ENCODE measurements at regions of chr1 and their contacts with region 1.

Region 1: DNA sequence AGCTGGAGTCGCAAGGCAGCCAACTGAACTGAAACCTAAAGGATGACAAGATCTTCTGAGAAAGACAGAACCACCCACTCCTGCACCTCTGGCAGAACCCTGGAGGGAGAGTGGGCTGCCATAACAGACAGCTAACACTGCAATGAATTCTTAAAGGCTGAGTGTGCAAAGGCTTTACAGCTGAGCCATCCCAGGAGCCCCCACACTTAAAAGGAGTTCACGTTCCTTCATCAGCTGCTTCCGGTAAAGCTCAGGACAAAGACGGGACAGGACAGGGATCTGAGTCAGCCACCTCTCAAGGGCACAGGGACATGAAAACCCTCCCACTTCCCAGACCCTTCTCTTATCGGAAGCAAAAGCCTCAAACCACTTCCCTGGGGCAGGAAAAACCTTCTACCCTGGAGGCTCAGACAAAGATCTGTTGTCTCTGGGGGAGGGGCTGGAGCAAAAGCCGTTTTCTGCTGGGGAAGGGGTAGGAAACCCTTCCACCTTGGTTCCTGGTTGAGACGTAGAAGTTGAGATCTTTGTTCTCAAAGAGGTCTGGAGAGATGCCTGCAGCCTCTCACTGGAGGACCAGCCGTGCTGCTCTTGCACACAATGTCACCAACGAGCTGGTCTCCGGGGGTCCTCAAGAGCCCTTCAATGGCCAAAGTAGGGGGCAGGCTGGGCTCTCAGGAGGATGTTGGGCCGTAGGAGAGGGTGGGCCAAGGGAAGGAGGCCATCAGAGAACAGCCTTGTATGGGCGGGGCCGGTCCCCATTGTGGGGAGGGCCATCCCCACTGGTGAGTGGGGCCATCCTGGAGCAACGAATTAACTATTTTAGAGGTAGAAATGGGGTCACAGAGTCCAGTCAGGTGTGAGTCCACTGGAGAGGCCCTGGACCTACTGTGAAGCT is 452.4 kb downstream of the PTPRU start:
- DNase-seq: no peak
- H3K4me3 ChIP-seq: no peak overlapping the region
- H3K27ac ChIP-seq: peak overlapping the region; percentile 53 to 93
- H3K4me1 ChIP-seq: peaks cover 13 to 74% of the 10 kb centered on the region in 2 experiments
- H3K27me3 ChIP-seq: no peaks in the 10 kb centered on the region
- CTCF ChIP-seq: no peak
- EP300 ChIP-seq: no peak
- RAD21 ChIP-seq: no peak

Region 2: GRCh38 chr1:29471443-29472313 is 217.0 kb before region 1 on chr1:
- CTCF ChIA-PET with region 1: interaction called, 10 read pairs
- POLR2A ChIA-PET with region 1: no interaction called
- DNase-seq: peak; percentile 64
- H3K4me3 ChIP-seq: no peak overlapping the region
- H3K27ac ChIP-seq: peak overlapping the region; percentile 35 to 100; a peak in 3 of 4 replicates
- H3K4me1 ChIP-seq: peaks cover 0 to 85% of the 10 kb centered on the region in 2 experiments; a peak in 2 of 4 replicates
- H3K27me3 ChIP-seq: no peaks in the 10 kb centered on the region; the same call in 1 of the 2 replicates
- CTCF ChIP-seq: no peak
- EP300 ChIP-seq: peak in 1 of 2 experiments; percentile 87; a peak in 2 of 4 replicates
- RAD21 ChIP-seq: 0 out of 2 replicates have a peak, but pooled peaks have one; percentile 19

Region 3: GRCh38 chr1:29708901-29709710 is 20.4 kb after region 1 on chr1:
- CTCF ChIA-PET with region 1: interaction called, 57 read pairs
- POLR2A ChIA-PET with region 1: interaction called, 3 read pairs
- DNase-seq: peak; percentile 87
- H3K4me3 ChIP-seq: 0 out of 4 replicates have a peak overlapping the region, but pooled peaks of 1 of the 2 experiments have one; percentile 2
- H3K27ac ChIP-seq: peak overlapping the region; percentile 98 to 100
- H3K4me1 ChIP-seq: peaks cover 36 to 51% of the 10 kb centered on the region in 2 experiments
- H3K27me3 ChIP-seq: no peaks in the 10 kb centered on the region
- CTCF ChIP-seq: no peak
- EP300 ChIP-seq: peak; percentile 28 to 67; a peak in 3 of 4 replicates
- RAD21 ChIP-seq: peak; percentile 16; the same call in 1 of the 2 replicates

Region 4: GRCh38 chr1:29752141-29752540 is 63.4 kb after region 1 on chr1:
- CTCF ChIA-PET with region 1: interaction called, 11 read pairs
- POLR2A ChIA-PET with region 1: no interaction called
- DNase-seq: no peak
- H3K4me3 ChIP-seq: no peak overlapping the region
- H3K27ac ChIP-seq: no peak overlapping the region
- H3K4me1 ChIP-seq: peaks cover 0 to 49% of the 10 kb centered on the region in 2 experiments; a peak in 1 of 4 replicates
- H3K27me3 ChIP-seq: no peaks in the 10 kb centered on the region
- CTCF ChIP-seq: no peak
- EP300 ChIP-seq: no peak
- RAD21 ChIP-seq: no peak